GM13977 (cell line): ENCODE measurements at regions of chr5 and their contacts with region 1.

Region 1: GRCh38 chr5:53170748-53171349 is 61.3 kb upstream of the MOCS2 start:
- DNase-seq: peak; percentile 28
- CTCF ChIP-seq: peak; percentile 73

Region 2: DNA sequence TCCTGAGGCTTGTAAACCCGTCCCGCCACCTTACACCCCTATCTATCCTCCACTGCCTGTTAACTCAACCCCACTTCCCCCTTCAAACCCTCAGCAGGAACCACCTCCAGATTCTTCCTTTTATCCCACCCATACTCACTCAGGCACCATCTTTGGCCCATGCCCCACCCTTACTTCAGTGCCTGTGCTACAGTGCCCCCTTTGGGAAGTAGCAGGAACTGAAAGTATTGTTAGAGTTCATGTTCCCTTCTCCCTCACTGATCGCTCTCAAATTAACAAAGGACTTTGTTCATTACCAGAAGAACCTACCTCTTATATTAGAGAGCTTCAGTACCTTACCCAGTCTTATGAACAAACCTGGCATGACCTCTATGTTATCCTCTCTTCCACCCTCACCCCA is 30.9 kb after region 1 on chr5:
- in situ Hi-C with region 1: no loop called
- DNase-seq: no peak
- CTCF ChIP-seq: peak; percentile 30

Region 3: GRCh38 chr5:54229041-54229780 is 1058.4 kb after region 1 on chr5:
- in situ Hi-C with region 1: loop called (anchors 25 kb)
- DNase-seq: peak; percentile 39
- CTCF ChIP-seq: peak; percentile 90